ENCODE measurements at regions of chr18 and their contacts with region 1.

Region 1: GRCh38 chr18:21053127-21053526 is 58.5 kb downstream of the ROCK1 start:
- DNase-seq: no peak
- ATAC-seq: no peak
- H3K4me3 ChIP-seq: no peak overlapping the region
- H3K27ac ChIP-seq: no peak overlapping the region
- H3K4me1 ChIP-seq: no peaks in the 10 kb centered on the region; a peak in 1 of 5 replicates
- H3K27me3 ChIP-seq: no peaks in the 10 kb centered on the region
- CTCF ChIP-seq: no peak
- EP300 ChIP-seq: no peak
- POLR2A ChIP-seq: no peak
- RAD21 ChIP-seq: no peak

Region 2: DNA sequence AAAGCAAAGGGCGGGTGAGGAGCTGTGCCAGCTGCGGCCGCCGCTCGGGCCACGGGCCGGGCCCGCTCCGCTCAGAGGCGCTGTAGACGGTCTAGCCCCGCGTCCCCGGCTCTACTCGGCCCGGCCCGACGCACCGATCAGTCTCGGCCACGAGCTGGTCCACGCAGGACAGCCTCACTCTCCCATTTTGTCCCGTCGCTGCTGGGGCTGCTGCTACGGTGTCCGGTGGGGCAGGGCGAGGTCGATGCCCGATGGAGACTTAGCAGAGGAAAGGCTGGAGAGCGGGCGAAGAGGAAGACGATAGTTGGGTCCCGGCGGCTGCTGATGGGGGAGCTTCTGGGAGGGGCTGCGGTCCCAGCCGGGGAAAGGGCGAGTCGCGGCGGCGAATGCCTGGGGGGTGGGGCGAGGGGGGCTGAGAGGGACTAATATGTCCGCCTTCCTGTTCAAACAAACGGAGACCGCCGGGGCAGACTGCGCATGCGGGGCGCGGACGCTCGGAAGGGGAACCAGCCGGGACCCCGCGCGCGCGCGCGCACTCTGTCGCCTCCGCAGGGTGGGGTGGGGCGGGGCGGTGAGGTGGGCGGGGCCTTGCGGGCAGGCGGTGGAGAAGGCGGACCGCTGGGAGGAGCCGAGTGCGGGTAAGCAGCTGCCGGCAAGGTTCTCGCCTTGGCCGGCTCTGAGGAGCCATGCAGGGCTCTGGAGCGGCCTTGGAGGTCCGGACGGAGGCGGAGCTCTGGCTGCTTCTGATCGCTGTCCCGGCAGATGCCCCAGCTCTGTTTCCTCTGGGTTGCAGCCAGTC is 58.4 kb after region 1 on chr18 and contains the start of gene ROCK1:
- CTCF ChIA-PET with region 1: no interaction called
- POLR2A ChIA-PET with region 1: no interaction called
- in situ Hi-C with region 1: no loop called
- intact Hi-C with region 1: loop called (anchors 5 kb)
- DNase-seq: peak; percentile 96 to 98 (median 98)
- ATAC-seq: peak; percentile 95
- H3K4me3 ChIP-seq: peak within 1 kb of the TSS; percentile 97
- H3K27ac ChIP-seq: peak within 1 kb of the TSS; percentile 84
- H3K4me1 ChIP-seq: peaks cover 7 to 15% of the 10 kb centered on the region in 2 experiments; a peak in 2 of 5 replicates
- H3K27me3 ChIP-seq: no peaks in the 10 kb centered on the region
- CTCF ChIP-seq: no peak
- EP300 ChIP-seq: no peak
- POLR2A ChIP-seq: peak; percentile 65
- RAD21 ChIP-seq: no peak
- polyA plus RNA-seq, gene ROCK1: 7.4 to 8.9 TPM

Region 3: GRCh38 chr18:21163647-21164547 is 110.8 kb after region 1 on chr18:
- CTCF ChIA-PET with region 1: no interaction called
- POLR2A ChIA-PET with region 1: no interaction called
- in situ Hi-C with region 1: no loop called
- intact Hi-C with region 1: loop called (anchors 10 kb)
- DNase-seq: no peak
- ATAC-seq: no peak
- H3K4me3 ChIP-seq: no peak overlapping the region
- H3K27ac ChIP-seq: no peak overlapping the region
- H3K4me1 ChIP-seq: no peaks in the 10 kb centered on the region
- H3K27me3 ChIP-seq: no peaks in the 10 kb centered on the region
- CTCF ChIP-seq: no peak
- EP300 ChIP-seq: no peak
- POLR2A ChIP-seq: no peak
- RAD21 ChIP-seq: no peak

Measured in K562 (cell line).